ENCODE measurements at regions of chr1 and their contacts with region 1.

Region 1: DNA sequence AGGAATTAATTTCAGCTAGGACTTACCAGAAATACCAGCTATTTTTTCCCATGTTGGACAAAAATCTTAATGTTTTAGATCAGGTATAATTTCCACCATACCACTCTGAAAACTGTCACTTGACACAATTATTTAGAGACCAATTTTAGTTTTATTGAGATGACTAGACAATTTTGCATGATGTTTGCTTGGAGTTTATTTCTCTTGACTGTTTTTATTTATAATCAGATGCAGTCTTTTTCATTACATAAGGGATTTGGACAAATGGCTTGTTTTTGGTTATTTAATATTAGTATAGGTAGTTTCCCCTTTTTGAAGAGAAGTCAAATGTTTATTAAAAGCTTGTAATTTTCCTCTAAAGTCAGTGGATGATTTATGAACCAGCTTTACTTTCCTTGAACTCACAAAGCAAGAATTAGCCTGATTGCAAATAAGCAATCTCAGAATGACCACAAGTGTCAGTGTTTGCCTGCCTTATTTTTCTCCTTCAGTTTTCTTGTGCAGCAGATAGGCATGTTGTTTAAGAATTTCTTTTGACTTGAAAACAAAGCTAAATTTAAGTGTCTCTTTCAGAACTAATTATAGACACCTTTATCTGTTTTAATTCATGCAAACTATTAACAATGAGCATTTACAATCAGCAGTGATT is 3.8 kb upstream of the B3GALT2 start:
- DNase-seq: peak in 2 of 5 donors; percentile 12 to 33
- H3K4me3 ChIP-seq: no peak overlapping the region
- H3K4me3 Mint-ChIP-seq: peak overlapping the region in 2 of 8 donors; percentile 7 to 46
- H3K27ac ChIP-seq: no peak overlapping the region
- H3K27ac Mint-ChIP-seq: peak overlapping the region in 5 of 7 donors; percentile 15 to 78 (median 30)
- H3K4me1 ChIP-seq: peaks cover 51% of the 10 kb centered on the region
- H3K4me1 Mint-ChIP-seq: peaks cover 37 to 74% (median 55%) of the 10 kb centered on the region in 4 donors
- H3K27me3 ChIP-seq: no peaks in the 10 kb centered on the region
- H3K27me3 Mint-ChIP-seq: no peaks in the 10 kb centered on the region

Region 2: GRCh38 chr1:193131266-193131860 is 58.9 kb before region 1 on chr1:
- CTCF ChIA-PET with region 1: no interaction called
- POLR2A ChIA-PET with region 1: no interaction called
- intact Hi-C with region 1: no loop called
- DNase-seq: no peak
- H3K4me3 ChIP-seq: no peak overlapping the region
- H3K4me3 Mint-ChIP-seq: peak overlapping the region in 1 of 8 donors; percentile 17
- H3K27ac ChIP-seq: no peak overlapping the region
- H3K27ac Mint-ChIP-seq: peak overlapping the region in 3 of 7 donors; percentile 3 to 76 (median 17)
- H3K4me1 ChIP-seq: peaks cover 18% of the 10 kb centered on the region
- H3K4me1 Mint-ChIP-seq: peaks cover 29 to 46% (median 37%) of the 10 kb centered on the region in 4 donors
- H3K27me3 ChIP-seq: no peaks in the 10 kb centered on the region
- H3K27me3 Mint-ChIP-seq: no peaks in the 10 kb centered on the region

Region 3: GRCh38 chr1:193338194-193338593 is 148.0 kb after region 1 on chr1:
- CTCF ChIA-PET with region 1: interaction called, 13 read pairs
- POLR2A ChIA-PET with region 1: no interaction called
- intact Hi-C with region 1: no loop called
- DNase-seq: peak in 1 of 5 donors; percentile 4
- H3K4me3 ChIP-seq: no peak overlapping the region
- H3K4me3 Mint-ChIP-seq: no peak overlapping the region
- H3K27ac ChIP-seq: no peak overlapping the region
- H3K27ac Mint-ChIP-seq: no peak overlapping the region
- H3K4me1 ChIP-seq: no peaks in the 10 kb centered on the region
- H3K4me1 Mint-ChIP-seq: peaks cover 0 to 1% (median 0%) of the 10 kb centered on the region in 4 donors
- H3K27me3 ChIP-seq: no peaks in the 10 kb centered on the region
- H3K27me3 Mint-ChIP-seq: no peaks in the 10 kb centered on the region

Region 4: DNA sequence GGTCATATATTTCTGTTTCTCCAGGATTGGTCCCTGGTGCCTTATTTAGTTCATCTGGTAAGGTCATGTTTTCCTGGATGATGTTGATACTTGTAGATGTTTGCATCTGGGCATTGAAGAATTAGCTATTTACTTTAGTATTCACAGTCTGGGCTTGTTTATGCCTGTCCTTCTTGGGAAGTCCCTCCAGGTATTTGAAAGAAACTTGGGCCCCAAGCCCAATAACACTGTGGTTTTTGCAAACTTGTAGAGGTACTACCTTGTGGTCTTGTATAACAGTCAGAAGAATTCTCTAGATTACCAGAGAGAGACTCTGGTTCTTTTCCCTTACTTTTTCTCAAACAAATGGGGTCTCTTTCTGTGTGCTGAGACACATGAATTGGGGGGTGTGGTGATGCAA is 247.6 kb after region 1 on chr1:
- CTCF ChIA-PET with region 1: no interaction called
- POLR2A ChIA-PET with region 1: no interaction called
- intact Hi-C with region 1: no loop called
- DNase-seq: peak; percentile 17 to 55 (median 31)
- H3K4me3 ChIP-seq: no peak overlapping the region
- H3K4me3 Mint-ChIP-seq: peak overlapping the region in 6 of 8 donors; percentile 21 to 72 (median 52)
- H3K27ac ChIP-seq: peak overlapping the region; percentile 0
- H3K27ac Mint-ChIP-seq: peak overlapping the region; percentile 34 to 93 (median 79)
- H3K4me1 ChIP-seq: peaks cover 21% of the 10 kb centered on the region
- H3K4me1 Mint-ChIP-seq: peaks cover 19 to 38% (median 30%) of the 10 kb centered on the region in 4 donors
- H3K27me3 ChIP-seq: no peaks in the 10 kb centered on the region
- H3K27me3 Mint-ChIP-seq: no peaks in the 10 kb centered on the region